ENCODE measurements at regions of chr17 and their contacts with region 1.

Region 1: GRCh38 chr17:17972126-17972951 is at the starts of genes DRC3 and TOM1L2:
- DNase-seq: peak; percentile 100
- ATAC-seq: peak; percentile 97
- H3K4me3 Mint-ChIP-seq: peak within 1 kb of the TSS; percentile 86
- H3K27ac Mint-ChIP-seq: peak within 1 kb of the TSS; percentile 76
- H3K4me1 Mint-ChIP-seq: peaks cover 37% of the 10 kb centered on the region
- H3K27me3 Mint-ChIP-seq: no peaks in the 10 kb centered on the region
- total RNA-seq, gene DRC3: 0.11 to 0.18 TPM
- total RNA-seq, gene TOM1L2: 11.3 to 11.9 TPM

Region 2: GRCh38 chr17:17476865-17477467 is 495.4 kb before region 1 on chr17 and contains the start of gene MED9:
- CTCF ChIA-PET with region 1: no interaction called
- POLR2A ChIA-PET with region 1: no interaction called
- intact Hi-C with region 1: loop called in 1 of 2 experiments (anchors 2 kb)
- DNase-seq: peak; percentile 97
- ATAC-seq: peak; percentile 94
- H3K4me3 Mint-ChIP-seq: peak within 1 kb of the TSS; percentile 94
- H3K27ac Mint-ChIP-seq: peak within 1 kb of the TSS; percentile 84
- H3K4me1 Mint-ChIP-seq: peaks cover 44% of the 10 kb centered on the region
- H3K27me3 Mint-ChIP-seq: no peaks in the 10 kb centered on the region
- total RNA-seq, gene MED9: 12.2 to 14.3 TPM

Region 3: GRCh38 chr17:17823433-17824118 is 148.8 kb before region 1 on chr17:
- CTCF ChIA-PET with region 1: no interaction called
- POLR2A ChIA-PET with region 1: no interaction called
- intact Hi-C with region 1: loop called in 1 of 2 experiments (anchors 1 kb)
- DNase-seq: peak; percentile 90
- ATAC-seq: peak; percentile 80
- H3K4me3 Mint-ChIP-seq: peak overlapping the region; percentile 72
- H3K27ac Mint-ChIP-seq: peak overlapping the region; percentile 96
- H3K4me1 Mint-ChIP-seq: peaks cover 92% of the 10 kb centered on the region
- H3K27me3 Mint-ChIP-seq: no peaks in the 10 kb centered on the region

Region 4: GRCh38 chr17:17890773-17891759 is 81.3 kb before region 1 on chr17:
- CTCF ChIA-PET with region 1: interaction called, 4 read pairs
- POLR2A ChIA-PET with region 1: no interaction called
- intact Hi-C with region 1: loop called in 1 of 2 experiments (anchors 1 kb)
- DNase-seq: peak; percentile 73
- ATAC-seq: peak; percentile 88
- H3K4me3 Mint-ChIP-seq: no peak overlapping the region
- H3K27ac Mint-ChIP-seq: no peak overlapping the region
- H3K4me1 Mint-ChIP-seq: peaks cover 6% of the 10 kb centered on the region
- H3K27me3 Mint-ChIP-seq: no peaks in the 10 kb centered on the region

Region 5: GRCh38 chr17:18087610-18088491 is 115.5 kb after region 1 on chr17 and contains the start of gene DRG2:
- CTCF ChIA-PET with region 1: no interaction called
- POLR2A ChIA-PET with region 1: interaction called, 3 read pairs
- intact Hi-C with region 1: loop called in 1 of 2 experiments (anchors 1 kb)
- DNase-seq: peak; percentile 93
- ATAC-seq: peak; percentile 90
- H3K4me3 Mint-ChIP-seq: peak within 1 kb of the TSS; percentile 99
- H3K27ac Mint-ChIP-seq: peak within 1 kb of the TSS; percentile 98
- H3K4me1 Mint-ChIP-seq: peaks cover 22% of the 10 kb centered on the region
- H3K27me3 Mint-ChIP-seq: no peaks in the 10 kb centered on the region
- total RNA-seq, gene DRG2: 42.5 to 45.6 TPM

Region 6: GRCh38 chr17:18314731-18315561 is 342.6 kb after region 1 on chr17 and contains the starts of genes SMCR8 and TOP3A:
- CTCF ChIA-PET with region 1: no interaction called
- POLR2A ChIA-PET with region 1: no interaction called
- intact Hi-C with region 1: loop called in 1 of 2 experiments (anchors 1 kb)
- DNase-seq: peak; percentile 99
- ATAC-seq: peak; percentile 95
- H3K4me3 Mint-ChIP-seq: peak within 1 kb of the TSS; percentile 85
- H3K27ac Mint-ChIP-seq: peak within 1 kb of the TSS; percentile 100
- H3K4me1 Mint-ChIP-seq: peaks cover 71% of the 10 kb centered on the region
- H3K27me3 Mint-ChIP-seq: no peaks in the 10 kb centered on the region
- total RNA-seq, gene SMCR8: 13.2 to 14.5 TPM
- total RNA-seq, gene TOP3A: 44.1 to 57.9 TPM

Measured in activated CD4-positive, alpha-beta T cell treated with anti-CD3 and anti-CD28 coated beads for 36 hours (primary cell).